HCT116 (cell line): ENCODE measurements at regions of chr18 and their contacts with region 1.

Region 1: GRCh38 chr18:50909261-50909660 is 30.3 kb downstream of the ME2 start:
- DNase-seq: no peak
- ATAC-seq: no peak
- H3K4me3 ChIP-seq: no peak overlapping the region
- H3K27ac ChIP-seq: no peak overlapping the region
- H3K4me1 ChIP-seq: no peaks in the 10 kb centered on the region
- H3K27me3 ChIP-seq: no peaks in the 10 kb centered on the region
- CTCF ChIP-seq: no peak
- POLR2A ChIP-seq: no peak
- RAD21 ChIP-seq: no peak

Region 2: GRCh38 chr18:50898919-50899318 is 10.3 kb before region 1 on chr18:
- CTCF ChIA-PET with region 1: no interaction called
- POLR2A ChIA-PET with region 1: no interaction called
- RAD21 ChIA-PET with region 1: no interaction called
- intact Hi-C with region 1: loop called (anchors 1 kb)
- DNase-seq: no peak
- ATAC-seq: no peak
- H3K4me3 ChIP-seq: no peak overlapping the region
- H3K27ac ChIP-seq: no peak overlapping the region
- H3K4me1 ChIP-seq: no peaks in the 10 kb centered on the region
- H3K27me3 ChIP-seq: no peaks in the 10 kb centered on the region
- CTCF ChIP-seq: no peak
- POLR2A ChIP-seq: no peak
- RAD21 ChIP-seq: no peak

Region 3: DNA sequence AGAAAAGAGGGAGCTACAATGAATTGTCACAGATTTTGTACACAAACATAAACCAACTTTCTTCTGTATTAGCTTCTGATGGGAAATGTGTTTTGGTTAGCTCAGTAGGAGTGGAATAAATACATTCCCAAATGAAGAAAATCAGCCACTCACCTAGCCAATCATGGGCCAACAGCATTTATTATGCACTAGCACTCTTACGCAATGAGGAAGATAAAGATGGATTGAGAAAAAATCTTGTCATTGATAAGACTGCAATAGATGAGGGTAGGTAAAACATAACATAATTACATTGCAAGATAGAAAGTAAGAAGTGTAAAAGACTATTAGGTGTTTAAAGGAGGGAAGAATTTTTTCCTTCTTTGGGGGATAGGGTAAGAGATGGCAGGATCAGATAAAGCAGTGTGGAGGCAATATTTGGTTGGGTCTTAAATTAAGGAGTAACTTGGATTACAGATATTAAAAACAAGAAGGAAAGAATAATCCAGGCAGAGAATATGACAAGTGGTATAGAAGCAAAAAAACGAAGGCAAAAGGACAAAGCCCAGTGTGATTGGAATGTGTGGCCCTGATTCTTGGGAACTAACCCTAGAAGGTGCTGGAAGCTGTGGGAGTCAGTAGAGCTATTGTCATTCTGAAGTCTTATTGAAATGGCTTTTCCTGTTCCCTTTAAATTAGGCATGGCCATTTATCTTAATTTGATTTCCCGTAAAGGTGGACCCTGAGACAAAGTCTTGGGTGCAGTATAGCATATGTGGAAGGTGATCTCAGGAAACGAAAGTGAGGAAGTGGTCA is 496.6 kb after region 1 on chr18:
- CTCF ChIA-PET with region 1: no interaction called
- POLR2A ChIA-PET with region 1: no interaction called
- RAD21 ChIA-PET with region 1: no interaction called
- intact Hi-C with region 1: no loop called
- DNase-seq: no peak
- ATAC-seq: no peak
- H3K4me3 ChIP-seq: no peak overlapping the region
- H3K27ac ChIP-seq: no peak overlapping the region
- H3K4me1 ChIP-seq: no peaks in the 10 kb centered on the region
- H3K27me3 ChIP-seq: no peaks in the 10 kb centered on the region
- CTCF ChIP-seq: no peak
- POLR2A ChIP-seq: no peak
- RAD21 ChIP-seq: no peak